Left ventricle myocardium superior (tissue), 1 donor: ENCODE measurements at regions of chr10 and their contacts with region 1.

Region 1: DNA sequence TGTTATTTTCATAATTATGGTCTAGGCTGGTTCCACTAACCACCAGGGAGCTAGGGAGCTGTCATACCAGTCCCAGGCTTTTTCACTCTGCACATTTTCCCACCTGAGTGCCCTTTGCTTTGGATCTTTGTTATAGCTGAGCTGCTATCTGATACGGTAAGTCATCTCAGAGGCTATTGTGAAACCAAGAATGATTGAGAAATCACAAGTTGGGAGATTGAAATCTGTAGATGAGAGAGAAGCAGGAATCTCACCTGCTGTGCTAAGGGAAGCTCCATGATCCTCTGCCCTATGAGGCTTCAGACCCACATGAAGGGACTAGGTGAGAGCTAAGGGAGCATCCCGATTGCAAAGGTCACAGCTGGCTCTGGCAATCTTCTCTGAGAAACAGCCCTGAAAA is 307.8 kb downstream of the REEP3 start:
- DNase-seq: no peak
- ATAC-seq: no peak

Region 2: DNA sequence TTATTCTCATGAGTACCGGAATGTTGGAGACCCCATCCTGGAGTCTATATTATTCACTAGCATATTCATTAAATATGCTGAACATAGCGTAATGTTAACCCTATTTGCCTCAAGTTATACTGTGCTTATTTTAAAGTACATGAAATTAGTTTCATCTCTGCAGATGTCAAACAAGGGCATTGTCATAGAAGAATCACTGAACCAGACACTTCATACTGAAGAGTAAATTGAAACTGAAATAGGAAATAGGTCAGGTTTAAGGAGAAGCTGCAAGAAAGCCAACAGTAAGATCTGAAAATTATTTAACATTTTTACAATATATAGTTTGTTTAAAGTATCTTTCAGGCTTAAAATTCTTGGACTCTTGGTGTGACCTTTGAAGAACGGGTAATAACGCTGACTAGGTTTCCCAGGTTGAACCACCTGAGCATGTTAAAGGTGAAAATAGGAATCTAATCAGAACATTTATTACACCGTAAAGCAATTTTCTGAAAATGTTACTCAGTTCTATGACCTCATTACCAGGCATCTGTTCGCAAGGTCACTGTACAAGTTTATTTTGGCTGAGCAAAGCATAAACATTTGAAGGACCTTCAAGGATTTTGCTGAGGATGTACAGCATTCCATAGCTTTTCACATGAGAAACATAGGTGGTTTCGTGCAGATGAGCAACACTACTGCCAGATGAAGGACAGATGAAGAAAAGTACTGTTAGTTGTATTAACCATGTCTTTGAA is 225.1 kb before region 1 on chr10:
- intact Hi-C with region 1: no loop called
- DNase-seq: no peak
- ATAC-seq: no peak

Region 3: GRCh38 chr10:64952042-64952441 is 1123.0 kb after region 1 on chr10:
- intact Hi-C with region 1: loop called (anchors 5 kb)
- DNase-seq: no peak
- ATAC-seq: no peak